ENCODE measurements at regions of chr5 and their contacts with region 1.

Region 1: GRCh38 chr5:77844623-77845323 is 68.6 kb upstream of the TBCA start:
- DNase-seq: peak in 1 of 3 donors; percentile 8
- H3K4me3 ChIP-seq: peak overlapping the region; percentile 46 to 85 (median 54)
- H3K4me3 Mint-ChIP-seq: peak overlapping the region; percentile 81 to 97
- H3K27ac ChIP-seq: no peak overlapping the region
- H3K27ac Mint-ChIP-seq: no peak overlapping the region
- H3K4me1 ChIP-seq: peaks cover 8 to 17% of the 10 kb centered on the region in 2 donors
- H3K4me1 Mint-ChIP-seq: peaks cover 23% of the 10 kb centered on the region
- H3K27me3 ChIP-seq: peaks cover 28 to 83% of the 10 kb centered on the region in 2 donors
- H3K27me3 Mint-ChIP-seq: peaks cover 23 to 81% (median 41%) of the 10 kb centered on the region in 3 donors
- CTCF ChIP-seq: peak; percentile 60

Region 2: DNA sequence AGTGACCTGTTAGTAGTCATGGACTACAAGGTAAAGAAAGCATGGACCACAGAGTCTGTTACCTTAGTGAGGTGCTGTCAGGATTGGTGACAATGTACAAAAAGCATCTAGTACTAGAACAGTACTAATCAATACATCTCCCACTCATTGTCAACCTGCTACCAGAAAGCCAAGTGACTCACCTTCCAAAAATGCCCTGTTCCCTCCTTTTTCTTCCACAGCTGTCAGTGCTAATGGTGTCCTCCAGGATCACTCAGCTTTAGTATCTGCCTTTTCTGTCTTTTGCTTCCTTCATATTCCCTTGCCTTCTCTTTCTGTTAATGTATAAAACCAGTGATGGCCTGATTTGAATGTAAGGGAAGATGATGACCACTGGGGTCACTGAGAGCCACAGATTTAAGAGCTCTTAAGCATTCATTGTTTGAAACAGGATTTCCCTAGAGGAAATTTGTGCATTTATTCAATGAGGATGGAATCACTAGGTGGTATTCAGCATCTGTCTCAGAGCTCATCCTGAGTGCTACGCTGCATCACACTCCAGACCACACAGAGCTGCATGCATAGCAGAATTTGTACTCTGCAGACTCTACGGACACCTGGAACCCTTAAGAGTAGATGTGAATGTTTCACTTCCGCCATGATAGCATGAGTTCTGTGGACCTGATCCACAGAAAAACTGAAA is 1690.6 kb before region 1 on chr5:
- intact Hi-C with region 1: no loop called
- DNase-seq: no peak
- H3K4me3 ChIP-seq: no peak overlapping the region
- H3K4me3 Mint-ChIP-seq: no peak overlapping the region
- H3K27ac ChIP-seq: no peak overlapping the region
- H3K27ac Mint-ChIP-seq: no peak overlapping the region
- H3K4me1 ChIP-seq: no peaks in the 10 kb centered on the region
- H3K4me1 Mint-ChIP-seq: peaks cover 6% of the 10 kb centered on the region
- H3K27me3 ChIP-seq: peaks cover 0 to 4% of the 10 kb centered on the region in 2 donors
- H3K27me3 Mint-ChIP-seq: peaks cover 0 to 2% (median 0%) of the 10 kb centered on the region in 3 donors
- CTCF ChIP-seq: no peak

Region 3: DNA sequence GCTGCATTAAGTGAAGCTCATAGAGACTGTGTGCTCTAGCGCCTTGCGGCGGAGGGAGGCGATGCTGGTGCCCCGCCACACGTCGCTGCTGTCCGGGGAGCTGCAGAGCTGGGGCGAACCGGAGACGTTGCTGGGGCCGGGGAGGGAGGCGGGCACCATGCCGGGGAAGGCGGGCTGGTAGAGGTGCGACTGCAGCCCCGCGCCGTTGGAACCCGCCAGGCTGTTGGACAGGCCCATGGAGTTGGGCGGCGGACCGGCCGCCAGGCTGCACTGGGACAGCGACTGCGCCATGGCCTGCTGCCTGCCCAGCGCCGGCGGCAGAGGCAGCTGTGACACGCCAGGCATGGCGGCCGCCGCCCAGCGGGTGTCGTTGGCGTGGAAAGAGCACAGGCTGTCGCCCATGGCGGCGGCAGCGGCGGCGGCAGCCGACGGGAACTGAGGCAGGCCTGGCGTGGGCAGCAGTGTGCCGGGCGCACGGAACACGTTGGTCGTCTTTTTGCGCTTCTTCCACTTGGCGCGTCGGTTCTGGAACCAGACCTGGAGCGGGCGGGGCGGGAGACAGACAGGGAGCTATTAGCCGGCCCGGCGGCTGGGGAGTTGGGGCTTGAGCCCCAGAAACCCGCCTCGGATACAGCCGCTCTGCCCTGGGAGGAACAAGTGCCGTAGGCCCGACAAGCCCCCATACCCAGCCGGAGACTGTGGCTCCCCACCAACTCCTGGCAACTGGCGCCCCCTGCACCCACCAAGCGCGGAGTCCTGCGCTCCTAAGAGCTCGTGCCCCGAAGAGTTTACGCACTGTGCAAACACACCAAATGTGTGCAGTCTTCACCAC is 214.3 kb before region 1 on chr5:
- intact Hi-C with region 1: loop called in 1 of 2 experiments (anchors 10 kb)
- DNase-seq: peak in 2 of 3 donors; percentile 11 to 35
- H3K4me3 ChIP-seq: peak overlapping the region; percentile 14 to 77 (median 28)
- H3K4me3 Mint-ChIP-seq: peak overlapping the region; percentile 76 to 95
- H3K27ac ChIP-seq: no peak overlapping the region
- H3K27ac Mint-ChIP-seq: no peak overlapping the region
- H3K4me1 ChIP-seq: peaks cover 14 to 35% of the 10 kb centered on the region in 2 donors
- H3K4me1 Mint-ChIP-seq: peaks cover 41% of the 10 kb centered on the region
- H3K27me3 ChIP-seq: peaks cover 86 to 95% of the 10 kb centered on the region in 2 donors
- H3K27me3 Mint-ChIP-seq: peaks cover 86 to 93% (median 93%) of the 10 kb centered on the region in 3 donors
- CTCF ChIP-seq: no peak

Region 4: GRCh38 chr5:77893225-77893860 is 48.6 kb after region 1 on chr5:
- intact Hi-C with region 1: no loop called
- DNase-seq: peak; percentile 30 to 54 (median 37)
- H3K4me3 ChIP-seq: no peak overlapping the region
- H3K4me3 Mint-ChIP-seq: no peak overlapping the region
- H3K27ac ChIP-seq: no peak overlapping the region
- H3K27ac Mint-ChIP-seq: peak overlapping the region in 4 of 7 donors; percentile 23 to 66 (median 45)
- H3K4me1 ChIP-seq: peaks cover 4 to 7% of the 10 kb centered on the region in 2 donors
- H3K4me1 Mint-ChIP-seq: peaks cover 9% of the 10 kb centered on the region
- H3K27me3 ChIP-seq: no peaks in the 10 kb centered on the region
- H3K27me3 Mint-ChIP-seq: no peaks in the 10 kb centered on the region
- CTCF ChIP-seq: no peak